Breast epithelium (tissue), 4 donors: ENCODE measurements at regions of chr2 and their contacts with region 1.

Region 1: GRCh38 chr2:217947383-217948350 is 55.1 kb downstream of the TNS1 start:
- DNase-seq: peak in 1 of 2 donors; percentile 39
- H3K4me3 ChIP-seq: no peak overlapping the region
- H3K27ac ChIP-seq: peak overlapping the region; percentile 10 to 51
- H3K4me1 ChIP-seq: peaks cover 4 to 43% of the 10 kb centered on the region in 2 donors
- H3K27me3 ChIP-seq: no peaks in the 10 kb centered on the region
- CTCF ChIP-seq: no peak
- POLR2A ChIP-seq: no peak

Region 2: GRCh38 chr2:217901835-217902378 is 45.8 kb before region 1 on chr2:
- intact Hi-C with region 1: loop called (anchors 1 kb)
- DNase-seq: no peak
- H3K4me3 ChIP-seq: peak overlapping the region in 1 of 3 donors; percentile 10
- H3K27ac ChIP-seq: peak overlapping the region; percentile 90 to 92
- H3K4me1 ChIP-seq: peaks cover 11 to 59% of the 10 kb centered on the region in 2 donors
- H3K27me3 ChIP-seq: no peaks in the 10 kb centered on the region
- CTCF ChIP-seq: no peak
- POLR2A ChIP-seq: no peak

Region 3: GRCh38 chr2:217913436-217913835 is 34.2 kb before region 1 on chr2:
- intact Hi-C with region 1: no loop called
- DNase-seq: no peak
- H3K4me3 ChIP-seq: no peak overlapping the region
- H3K27ac ChIP-seq: peak overlapping the region; percentile 90 to 92
- H3K4me1 ChIP-seq: peaks cover 29 to 41% of the 10 kb centered on the region in 2 donors
- H3K27me3 ChIP-seq: no peaks in the 10 kb centered on the region
- CTCF ChIP-seq: no peak
- POLR2A ChIP-seq: no peak

Region 4: DNA sequence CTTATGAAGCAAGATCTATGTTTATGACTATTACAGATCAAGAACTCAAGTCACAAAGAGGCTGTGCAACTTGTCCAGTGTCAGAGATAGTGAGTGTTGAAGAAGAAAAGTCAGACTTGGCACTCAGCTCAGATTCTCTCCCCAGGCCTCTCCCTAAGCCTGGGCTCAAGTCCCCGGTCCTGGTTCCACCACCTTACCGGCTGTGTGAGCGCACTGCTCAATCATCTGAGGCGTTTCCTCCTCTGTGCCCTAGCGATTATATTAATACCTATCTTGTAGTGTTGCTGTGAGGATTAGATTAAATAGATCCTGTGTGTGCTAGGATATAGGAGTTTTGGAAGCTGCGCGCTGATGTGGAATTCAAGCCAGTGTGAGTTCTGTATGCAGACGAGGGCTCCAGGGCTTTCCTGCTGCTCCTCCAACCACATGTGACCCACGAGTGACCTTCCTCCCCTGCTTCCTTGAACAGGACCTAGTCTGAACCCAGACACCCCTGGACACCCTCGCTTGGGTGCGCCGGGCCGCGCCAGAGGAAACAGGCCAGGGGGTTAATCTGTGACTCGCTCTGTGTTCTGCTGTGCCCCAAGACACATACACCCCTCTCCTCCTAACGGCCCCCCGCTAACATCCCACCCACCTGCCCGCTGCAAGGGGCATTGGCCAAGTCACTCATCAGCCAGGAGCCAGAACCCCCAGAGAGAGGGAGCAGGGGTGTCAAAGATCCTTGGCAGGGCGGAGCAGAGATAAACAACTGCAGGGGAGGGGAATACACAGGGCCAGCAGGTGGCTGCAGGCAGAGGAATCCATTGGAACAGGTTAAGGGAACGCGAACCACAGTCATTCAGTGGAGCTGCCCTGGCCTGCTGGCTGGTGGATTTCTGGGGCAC is 16.9 kb after region 1 on chr2:
- intact Hi-C with region 1: no loop called
- DNase-seq: peak in 1 of 2 donors; percentile 34
- H3K4me3 ChIP-seq: peak overlapping the region in 1 of 3 donors; percentile 4
- H3K27ac ChIP-seq: peak overlapping the region; percentile 74 to 87
- H3K4me1 ChIP-seq: peaks cover 6 to 19% of the 10 kb centered on the region in 2 donors
- H3K27me3 ChIP-seq: no peaks in the 10 kb centered on the region
- CTCF ChIP-seq: peak in 1 of 3 donors; percentile 16
- POLR2A ChIP-seq: no peak